CD4-positive, alpha-beta memory T cell (primary cell): ENCODE measurements at regions of chr15 and their contacts with region 1.

Region 1: DNA sequence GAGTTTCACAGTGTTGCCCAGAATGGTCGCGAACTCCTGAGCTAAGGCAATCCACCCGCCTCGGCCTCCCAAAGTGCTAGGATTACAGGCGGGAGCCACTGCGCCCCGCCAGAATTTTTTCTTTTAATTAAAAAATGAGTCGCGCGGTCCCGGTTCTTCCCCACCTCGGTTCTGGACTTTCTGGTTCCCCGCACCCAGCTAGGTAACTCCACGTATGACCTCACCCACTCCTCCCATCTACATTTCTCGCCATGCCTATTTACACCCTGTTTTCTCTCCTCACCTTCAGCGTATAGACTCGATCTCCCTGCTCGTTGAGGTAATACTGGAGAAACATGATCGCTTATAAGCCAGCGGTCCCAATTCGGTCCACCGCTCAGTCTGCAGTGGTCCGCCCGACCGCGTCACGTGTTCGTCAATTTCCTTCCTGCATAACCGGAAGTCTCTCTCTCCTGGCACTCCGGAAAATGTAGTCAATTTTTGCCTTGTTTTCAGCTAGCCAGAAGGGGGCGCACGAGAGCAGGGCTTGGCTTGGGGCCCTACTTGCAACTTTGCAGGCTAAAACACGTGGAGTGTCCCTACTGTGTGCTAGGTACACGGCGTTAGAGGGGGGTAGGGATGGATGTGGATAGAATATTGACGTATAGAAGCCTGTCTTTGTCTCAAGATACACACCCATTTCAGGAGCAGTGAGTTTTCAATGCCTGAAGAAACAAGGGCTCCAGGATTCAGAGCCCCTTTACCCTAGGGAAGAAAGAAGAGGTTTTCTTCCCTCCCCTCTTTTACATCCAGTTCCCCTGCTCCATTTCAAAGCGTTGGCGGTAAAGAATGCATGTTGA is at the starts of genes NOP10 and NUTM1:
- DNase-seq: peak; percentile 91 to 93 (median 92)
- H3K4me3 ChIP-seq: peak within 1 kb of the TSS; percentile 54 to 96
- H3K4me3 Mint-ChIP-seq: peak within 1 kb of the TSS in 2 of 8 donors; percentile 87
- H3K27ac ChIP-seq: peak within 1 kb of the TSS; percentile 73
- H3K27ac Mint-ChIP-seq: peak within 1 kb of the TSS in 5 of 7 donors; percentile 77 to 93 (median 88)
- H3K4me1 ChIP-seq: peaks cover 28% of the 10 kb centered on the region
- H3K4me1 Mint-ChIP-seq: peaks cover 14 to 31% (median 17%) of the 10 kb centered on the region in 4 donors
- H3K27me3 ChIP-seq: no peaks in the 10 kb centered on the region
- H3K27me3 Mint-ChIP-seq: no peaks in the 10 kb centered on the region
- total RNA-seq, gene NOP10: 73.5 to 77.2 TPM
- total RNA-seq, gene NUTM1: not detected

Region 2: DNA sequence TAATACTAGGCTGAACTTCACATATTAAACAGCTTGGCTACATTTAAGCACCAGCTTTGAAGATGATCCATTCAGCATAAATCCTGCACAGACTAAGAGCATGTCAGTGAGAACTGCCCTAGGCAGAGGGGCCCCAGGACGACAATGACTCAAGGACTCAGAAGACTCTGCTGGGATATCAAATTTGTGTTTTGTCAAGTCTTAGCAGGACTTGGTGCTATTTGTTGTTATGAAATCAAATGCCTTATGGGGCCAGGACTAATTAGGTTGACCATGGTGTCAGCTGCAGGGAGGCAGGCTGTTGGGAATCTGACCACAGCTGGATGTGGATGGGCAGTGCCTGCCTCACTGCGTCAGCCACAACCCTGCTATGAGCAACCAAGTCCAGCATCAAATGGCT is 940.4 kb before region 1 on chr15:
- CTCF ChIA-PET with region 1: no interaction called
- POLR2A ChIA-PET with region 1: no interaction called
- intact Hi-C with region 1: no loop called
- DNase-seq: no peak
- H3K4me3 ChIP-seq: no peak overlapping the region
- H3K4me3 Mint-ChIP-seq: no peak overlapping the region
- H3K27ac ChIP-seq: no peak overlapping the region
- H3K27ac Mint-ChIP-seq: no peak overlapping the region
- H3K4me1 ChIP-seq: no peaks in the 10 kb centered on the region
- H3K4me1 Mint-ChIP-seq: no peaks in the 10 kb centered on the region
- H3K27me3 ChIP-seq: no peaks in the 10 kb centered on the region
- H3K27me3 Mint-ChIP-seq: peaks cover 0 to 1% of the 10 kb centered on the region in 2 donors

Region 3: GRCh38 chr15:34038023-34038870 is 304.7 kb before region 1 on chr15:
- CTCF ChIA-PET with region 1: no interaction called
- POLR2A ChIA-PET with region 1: interaction called, 10 read pairs
- intact Hi-C with region 1: loop called (anchors 2 kb)
- DNase-seq: peak; percentile 65 to 74 (median 70)
- H3K4me3 ChIP-seq: peak overlapping the region; percentile 92 to 96
- H3K4me3 Mint-ChIP-seq: peak overlapping the region; percentile 85 to 97 (median 94)
- H3K27ac ChIP-seq: peak overlapping the region; percentile 73
- H3K27ac Mint-ChIP-seq: peak overlapping the region; percentile 83 to 96 (median 93)
- H3K4me1 ChIP-seq: peaks cover 13% of the 10 kb centered on the region
- H3K4me1 Mint-ChIP-seq: peaks cover 9 to 23% (median 15%) of the 10 kb centered on the region in 4 donors
- H3K27me3 ChIP-seq: no peaks in the 10 kb centered on the region
- H3K27me3 Mint-ChIP-seq: no peaks in the 10 kb centered on the region

Region 4: DNA sequence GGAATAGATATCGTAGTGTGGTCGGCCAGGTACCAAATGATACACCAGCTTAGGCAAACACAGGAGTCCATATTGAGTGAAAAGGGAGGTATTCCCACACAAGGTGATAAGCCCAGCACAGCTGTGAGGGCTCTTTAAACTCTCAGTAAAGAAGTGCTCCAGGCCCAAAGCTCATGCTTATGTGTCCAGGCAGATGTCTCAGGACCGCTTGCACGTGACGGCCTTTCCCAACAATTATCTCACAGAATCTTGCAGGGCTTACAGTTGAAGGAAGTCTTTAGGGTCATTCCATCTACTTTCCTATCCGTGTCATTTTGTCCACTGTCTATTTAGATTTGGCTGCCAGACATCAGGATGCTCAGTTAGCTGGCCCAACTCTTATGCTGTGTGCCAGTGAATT is 482.0 kb after region 1 on chr15:
- CTCF ChIA-PET with region 1: no interaction called
- POLR2A ChIA-PET with region 1: no interaction called
- intact Hi-C with region 1: no loop called
- DNase-seq: no peak
- H3K4me3 ChIP-seq: no peak overlapping the region
- H3K4me3 Mint-ChIP-seq: no peak overlapping the region
- H3K27ac ChIP-seq: no peak overlapping the region
- H3K27ac Mint-ChIP-seq: no peak overlapping the region
- H3K4me1 ChIP-seq: no peaks in the 10 kb centered on the region
- H3K4me1 Mint-ChIP-seq: no peaks in the 10 kb centered on the region
- H3K27me3 ChIP-seq: no peaks in the 10 kb centered on the region
- H3K27me3 Mint-ChIP-seq: peaks cover 10 to 29% of the 10 kb centered on the region in 2 donors